CD8-positive, alpha-beta T cell (primary cell): ENCODE measurements at regions of chr13 and their contacts with region 1.

Region 1: GRCh38 chr13:77094773-77095172 is 67.8 kb upstream of the FBXL3 start:
- DNase-seq: no peak
- ATAC-seq: no peak
- H3K4me3 ChIP-seq: no peak overlapping the region
- H3K4me3 Mint-ChIP-seq: no peak overlapping the region
- H3K27ac ChIP-seq: no peak overlapping the region
- H3K27ac Mint-ChIP-seq: no peak overlapping the region
- H3K4me1 ChIP-seq: no peaks in the 10 kb centered on the region
- H3K4me1 Mint-ChIP-seq: no peaks in the 10 kb centered on the region
- H3K27me3 ChIP-seq: no peaks in the 10 kb centered on the region
- H3K27me3 Mint-ChIP-seq: no peaks in the 10 kb centered on the region
- CTCF ChIP-seq: no peak

Region 2: DNA sequence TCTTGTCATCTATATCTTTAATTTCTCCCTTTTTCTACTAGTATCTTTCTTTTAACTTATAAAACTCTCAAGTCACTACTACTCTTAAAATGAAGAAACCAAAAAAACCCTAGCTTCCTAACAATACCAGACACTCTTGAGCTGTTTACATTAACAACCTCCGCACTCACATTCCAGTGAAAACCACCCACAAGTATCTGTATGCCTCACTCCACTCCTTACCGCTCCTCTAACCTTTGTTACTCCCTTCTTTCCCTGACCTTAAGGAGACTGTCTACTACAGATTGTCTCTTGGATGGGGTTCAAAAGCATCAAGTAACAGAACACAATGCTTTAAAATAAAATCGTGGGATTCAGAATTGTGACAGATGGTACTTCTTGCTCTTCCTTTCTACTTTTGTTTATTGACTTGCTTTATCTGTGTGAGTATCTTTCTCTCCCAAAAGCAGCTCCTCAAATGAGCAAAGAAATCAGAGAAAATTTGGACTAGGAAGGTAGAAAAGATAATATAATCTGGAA is 42.2 kb after region 1 on chr13:
- CTCF ChIA-PET with region 1: no interaction called
- POLR2A ChIA-PET with region 1: no interaction called
- intact Hi-C with region 1: loop called in 1 of 2 experiments (anchors 5 kb)
- DNase-seq: no peak
- ATAC-seq: no peak
- H3K4me3 ChIP-seq: no peak overlapping the region
- H3K4me3 Mint-ChIP-seq: no peak overlapping the region
- H3K27ac ChIP-seq: no peak overlapping the region
- H3K27ac Mint-ChIP-seq: peak overlapping the region; percentile 2
- H3K4me1 ChIP-seq: no peaks in the 10 kb centered on the region
- H3K4me1 Mint-ChIP-seq: no peaks in the 10 kb centered on the region
- H3K27me3 ChIP-seq: no peaks in the 10 kb centered on the region
- H3K27me3 Mint-ChIP-seq: no peaks in the 10 kb centered on the region
- CTCF ChIP-seq: no peak